MCF 10A (cell line): ENCODE measurements at regions of chr3 and their contacts with region 1.

Region 1: GRCh38 chr3:152298393-152299242 is 29.9 kb downstream of the MBNL1 start:
- DNase-seq: peak; percentile 97
- H3K4me3 Mint-ChIP-seq: peak overlapping the region; percentile 82
- H3K27ac Mint-ChIP-seq: peak overlapping the region; percentile 86
- H3K4me1 Mint-ChIP-seq: peaks cover 33% of the 10 kb centered on the region
- H3K27me3 Mint-ChIP-seq: no peaks in the 10 kb centered on the region
- CTCF ChIP-seq: no peak

Region 2: DNA sequence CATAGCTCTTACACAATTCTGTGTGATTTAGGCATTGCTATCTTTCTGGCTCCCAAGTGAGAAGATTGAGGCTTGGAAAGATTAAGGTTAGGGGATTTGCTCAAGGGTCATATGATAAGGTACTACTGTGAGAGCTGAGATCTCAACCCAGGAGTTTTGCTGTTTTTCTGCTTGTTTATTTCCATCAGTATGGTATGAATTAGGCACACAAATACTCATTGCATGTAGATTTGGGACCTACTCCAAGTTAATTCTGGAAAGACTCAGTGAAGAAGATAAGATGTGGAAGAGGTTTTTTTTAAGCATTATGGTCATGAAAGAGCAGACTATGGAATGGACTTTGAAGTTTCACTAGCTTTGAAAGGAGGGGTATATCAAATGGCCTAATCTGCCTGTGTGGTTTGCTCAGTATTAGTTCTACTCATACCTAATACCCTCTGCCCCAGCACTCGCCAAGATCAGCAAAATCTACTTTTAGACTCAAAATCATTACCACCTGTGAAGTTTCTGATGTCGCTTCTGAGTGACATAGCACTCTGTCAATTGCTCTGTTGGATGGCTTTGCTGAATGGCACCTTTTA is 17.4 kb before region 1 on chr3:
- CTCF ChIA-PET with region 1: interaction called, 3 read pairs
- POLR2A ChIA-PET with region 1: interaction called, 10 read pairs
- intact Hi-C with region 1: no loop called
- DNase-seq: no peak
- H3K4me3 Mint-ChIP-seq: no peak overlapping the region
- H3K27ac Mint-ChIP-seq: no peak overlapping the region
- H3K4me1 Mint-ChIP-seq: peaks cover 39% of the 10 kb centered on the region
- H3K27me3 Mint-ChIP-seq: no peaks in the 10 kb centered on the region
- CTCF ChIP-seq: no peak

Region 3: DNA sequence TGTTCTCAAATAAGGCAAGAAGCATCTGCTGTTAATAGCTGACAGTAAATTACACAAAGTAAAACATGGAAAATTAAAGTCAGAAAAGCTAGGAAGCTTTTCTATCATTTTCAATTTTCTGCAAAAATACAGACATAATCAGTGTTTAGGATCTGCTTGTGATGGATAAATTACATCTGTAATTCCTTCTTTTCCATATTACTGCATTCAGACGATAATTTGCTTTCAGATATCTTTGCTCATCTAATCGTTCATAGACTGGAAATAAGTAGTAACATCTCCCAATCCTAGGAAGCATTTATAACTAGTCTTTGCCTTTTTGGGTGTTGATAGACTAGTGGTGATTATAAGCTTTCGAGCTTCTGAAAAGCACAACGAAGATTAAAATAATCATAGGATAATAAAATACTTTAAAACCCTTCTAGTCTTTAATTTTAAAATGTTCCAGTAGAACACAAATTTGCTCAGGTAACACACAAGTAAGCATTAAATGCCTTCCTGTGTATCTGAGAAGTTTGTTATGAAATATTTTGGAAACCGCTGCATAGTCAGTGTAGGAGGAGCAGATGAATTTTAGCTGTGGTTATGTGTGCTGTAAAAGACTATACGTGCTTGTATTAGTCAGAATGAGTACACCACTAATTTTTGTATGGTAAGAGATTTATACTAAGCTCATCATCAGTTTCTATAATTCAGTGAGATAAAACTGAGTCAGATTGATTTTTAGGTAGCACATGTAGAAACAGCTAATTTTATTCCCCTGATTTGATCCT is 11.1 kb after region 1 on chr3:
- CTCF ChIA-PET with region 1: interaction called, 4 read pairs
- POLR2A ChIA-PET with region 1: interaction called, 45 read pairs
- intact Hi-C with region 1: no loop called
- DNase-seq: peak; percentile 54
- H3K4me3 Mint-ChIP-seq: no peak overlapping the region
- H3K27ac Mint-ChIP-seq: no peak overlapping the region
- H3K4me1 Mint-ChIP-seq: peaks cover 21% of the 10 kb centered on the region
- H3K27me3 Mint-ChIP-seq: no peaks in the 10 kb centered on the region
- CTCF ChIP-seq: no peak

Region 4: GRCh38 chr3:152359395-152360240 is 61.0 kb after region 1 on chr3:
- CTCF ChIA-PET with region 1: no interaction called
- POLR2A ChIA-PET with region 1: interaction called, 12 read pairs
- intact Hi-C with region 1: no loop called
- DNase-seq: no peak
- H3K4me3 Mint-ChIP-seq: no peak overlapping the region
- H3K27ac Mint-ChIP-seq: peak overlapping the region; percentile 20
- H3K4me1 Mint-ChIP-seq: peaks cover 35% of the 10 kb centered on the region
- H3K27me3 Mint-ChIP-seq: no peaks in the 10 kb centered on the region
- CTCF ChIP-seq: no peak

Region 5: GRCh38 chr3:152444029-152444641 is 145.5 kb after region 1 on chr3:
- CTCF ChIA-PET with region 1: interaction called, 4 read pairs
- POLR2A ChIA-PET with region 1: interaction called, 16 read pairs
- intact Hi-C with region 1: no loop called
- DNase-seq: peak; percentile 68
- H3K4me3 Mint-ChIP-seq: no peak overlapping the region
- H3K27ac Mint-ChIP-seq: no peak overlapping the region
- H3K4me1 Mint-ChIP-seq: peaks cover 18% of the 10 kb centered on the region
- H3K27me3 Mint-ChIP-seq: no peaks in the 10 kb centered on the region
- CTCF ChIP-seq: peak; percentile 56

Region 6: GRCh38 chr3:152539191-152539768 is 240.7 kb after region 1 on chr3:
- CTCF ChIA-PET with region 1: no interaction called
- POLR2A ChIA-PET with region 1: no interaction called
- intact Hi-C with region 1: no loop called
- DNase-seq: no peak
- H3K4me3 Mint-ChIP-seq: no peak overlapping the region
- H3K27ac Mint-ChIP-seq: no peak overlapping the region
- H3K4me1 Mint-ChIP-seq: no peaks in the 10 kb centered on the region
- H3K27me3 Mint-ChIP-seq: no peaks in the 10 kb centered on the region
- CTCF ChIP-seq: no peak